ENCODE measurements at regions of chr18 and their contacts with region 1.

Region 1: GRCh38 chr18:63518178-63519012 is 23.8 kb upstream of the SERPINB12 start:
- DNase-seq: peak in 12 of 14 experiments; percentile 2 to 81 (median 34)
- ATAC-seq: peak; percentile 66
- H3K4me3 ChIP-seq: no peak overlapping the region
- H3K4me3 Mint-ChIP-seq: no peak overlapping the region
- H3K27ac ChIP-seq: no peak overlapping the region
- H3K27ac Mint-ChIP-seq: no peak overlapping the region
- H3K4me1 ChIP-seq: no peaks in the 10 kb centered on the region
- H3K4me1 Mint-ChIP-seq: peaks cover 5% of the 10 kb centered on the region
- H3K27me3 ChIP-seq: no peaks in the 10 kb centered on the region
- H3K27me3 Mint-ChIP-seq: peaks cover 24% of the 10 kb centered on the region
- CTCF ChIP-seq: peak; percentile 83

Region 2: GRCh38 chr18:63476666-63477065 is 41.7 kb before region 1 on chr18 and contains the start of gene SERPINB5:
- CTCF ChIA-PET with region 1: no interaction called
- POLR2A ChIA-PET with region 1: no interaction called
- intact Hi-C with region 1: no loop called
- DNase-seq: no peak
- ATAC-seq: no peak
- H3K4me3 ChIP-seq: no peak within 1 kb of the TSS
- H3K4me3 Mint-ChIP-seq: no peak within 1 kb of the TSS
- H3K27ac ChIP-seq: no peak within 1 kb of the TSS
- H3K27ac Mint-ChIP-seq: no peak within 1 kb of the TSS
- H3K4me1 ChIP-seq: no peaks in the 10 kb centered on the region
- H3K4me1 Mint-ChIP-seq: no peaks in the 10 kb centered on the region
- H3K27me3 ChIP-seq: peaks cover 0 to 4% of the 10 kb centered on the region in 2 experiments
- H3K27me3 Mint-ChIP-seq: peaks cover 29% of the 10 kb centered on the region
- CTCF ChIP-seq: no peak
- total RNA-seq, gene SERPINB5: not detected

Region 3: DNA sequence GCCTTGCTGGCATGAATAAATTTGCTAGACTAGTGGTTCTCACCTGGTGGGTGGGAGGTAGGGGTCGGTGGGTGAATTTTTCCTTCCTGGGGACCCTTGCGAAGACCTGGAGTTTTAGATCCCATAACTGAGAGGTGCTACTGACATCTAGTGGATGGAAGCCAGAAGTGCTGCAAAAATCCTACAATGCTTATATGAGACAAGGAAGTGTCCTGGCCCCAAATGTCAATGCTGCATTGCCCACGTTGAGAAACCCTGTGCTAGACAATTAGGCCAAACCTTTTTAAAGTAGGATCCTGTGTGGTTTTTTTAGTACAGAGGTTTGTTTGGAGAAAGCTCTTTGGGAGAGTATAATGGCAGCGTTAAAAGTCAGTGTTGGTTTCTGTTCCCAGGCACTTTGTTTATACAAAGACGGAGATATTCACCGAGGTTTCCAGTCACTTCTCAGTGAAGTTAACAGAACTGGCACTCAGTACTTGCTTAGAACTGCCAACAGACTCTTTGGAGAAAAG is 461.1 kb after region 1 on chr18:
- CTCF ChIA-PET with region 1: no interaction called
- POLR2A ChIA-PET with region 1: no interaction called
- intact Hi-C with region 1: loop called (anchors 1 kb)
- DNase-seq: peak in 10 of 14 experiments; percentile 6 to 73 (median 26)
- ATAC-seq: peak; percentile 78
- H3K4me3 ChIP-seq: no peak overlapping the region
- H3K4me3 Mint-ChIP-seq: no peak overlapping the region
- H3K27ac ChIP-seq: no peak overlapping the region
- H3K27ac Mint-ChIP-seq: no peak overlapping the region
- H3K4me1 ChIP-seq: peaks cover 5% of the 10 kb centered on the region
- H3K4me1 Mint-ChIP-seq: peaks cover 7% of the 10 kb centered on the region
- H3K27me3 ChIP-seq: no peaks in the 10 kb centered on the region
- H3K27me3 Mint-ChIP-seq: no peaks in the 10 kb centered on the region
- CTCF ChIP-seq: peak; percentile 89